PC-9 (cell line): ENCODE measurements at regions of chr1 and their contacts with region 1.

Region 1: DNA sequence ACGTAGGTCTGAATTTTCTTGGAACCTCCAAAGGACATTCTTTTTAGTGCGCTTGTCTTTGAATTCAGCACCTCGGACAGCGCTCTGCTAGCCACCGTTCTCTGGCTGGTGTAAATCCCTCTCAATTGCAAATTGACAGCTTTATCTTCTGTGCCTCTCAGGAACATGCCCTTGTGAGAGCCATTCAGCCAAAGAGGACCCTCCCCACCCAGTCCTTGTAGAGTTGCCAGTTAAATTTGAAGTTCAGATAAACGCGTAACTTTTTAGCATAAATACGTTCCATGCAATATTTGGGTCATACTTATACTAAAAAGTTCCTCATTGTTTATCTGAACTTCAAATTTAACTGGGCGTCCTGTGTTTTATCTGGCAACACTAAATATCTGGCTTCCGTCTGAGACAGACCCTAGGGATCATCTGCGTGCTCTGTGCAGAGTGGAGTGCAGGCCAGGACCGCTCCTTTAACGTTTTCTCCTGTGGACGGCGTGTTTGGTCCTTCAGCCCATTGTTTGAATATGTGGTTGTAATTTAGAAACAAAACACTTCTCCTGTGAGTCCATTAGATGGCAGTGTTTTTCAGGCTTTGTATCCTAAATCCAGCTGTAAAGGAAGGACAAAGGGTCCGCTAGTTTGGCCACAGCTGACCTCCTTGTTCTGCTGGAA is 7.0 kb downstream of the KCNAB2 start:
- DNase-seq: peak in 1 of 2 experiments; percentile 46
- H3K4me3 ChIP-seq: no peak overlapping the region
- H3K27ac ChIP-seq: no peak overlapping the region
- H3K4me1 ChIP-seq: no peaks in the 10 kb centered on the region; the same call in 1 of the 2 replicates
- H3K27me3 ChIP-seq: no peaks in the 10 kb centered on the region
- CTCF ChIP-seq: peak; percentile 71

Region 2: DNA sequence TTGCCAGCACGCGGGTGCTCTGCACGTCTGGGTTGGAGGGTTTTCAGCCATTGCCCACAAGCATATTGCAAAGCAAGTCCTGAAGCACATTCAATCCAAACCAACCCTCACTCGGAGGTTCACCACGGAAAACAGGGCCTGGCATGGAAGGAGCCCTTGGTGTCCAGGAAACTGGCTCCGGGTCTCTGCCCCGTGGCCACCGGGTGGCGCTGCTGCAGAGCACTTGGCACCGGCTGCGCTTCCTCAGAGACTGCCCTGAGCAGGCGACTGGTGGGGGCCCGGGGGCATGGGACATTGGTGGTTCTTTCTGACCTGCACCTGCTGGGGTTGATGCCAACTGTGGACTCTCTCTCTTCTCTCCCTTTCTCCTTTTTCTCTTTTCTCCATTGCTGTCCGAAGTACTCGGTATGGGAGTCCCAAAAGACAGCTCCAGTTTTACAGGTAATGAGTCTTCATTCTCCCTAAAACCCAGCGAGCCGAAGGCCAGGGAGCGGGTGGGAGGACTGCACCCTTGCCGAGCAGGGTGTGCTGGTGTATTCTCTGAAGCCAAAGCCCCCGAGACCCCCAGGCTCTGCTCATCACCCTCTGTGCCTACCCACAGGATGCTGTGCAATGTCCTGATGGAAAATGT is 11.1 kb before region 1 on chr1:
- CTCF ChIA-PET with region 1: interaction called, 10 read pairs
- POLR2A ChIA-PET with region 1: no interaction called
- intact Hi-C with region 1: no loop called
- DNase-seq: peak in 1 of 2 experiments; percentile 44
- H3K4me3 ChIP-seq: no peak overlapping the region
- H3K27ac ChIP-seq: no peak overlapping the region
- H3K4me1 ChIP-seq: no peaks in the 10 kb centered on the region
- H3K27me3 ChIP-seq: no peaks in the 10 kb centered on the region
- CTCF ChIP-seq: peak; percentile 62

Region 3: DNA sequence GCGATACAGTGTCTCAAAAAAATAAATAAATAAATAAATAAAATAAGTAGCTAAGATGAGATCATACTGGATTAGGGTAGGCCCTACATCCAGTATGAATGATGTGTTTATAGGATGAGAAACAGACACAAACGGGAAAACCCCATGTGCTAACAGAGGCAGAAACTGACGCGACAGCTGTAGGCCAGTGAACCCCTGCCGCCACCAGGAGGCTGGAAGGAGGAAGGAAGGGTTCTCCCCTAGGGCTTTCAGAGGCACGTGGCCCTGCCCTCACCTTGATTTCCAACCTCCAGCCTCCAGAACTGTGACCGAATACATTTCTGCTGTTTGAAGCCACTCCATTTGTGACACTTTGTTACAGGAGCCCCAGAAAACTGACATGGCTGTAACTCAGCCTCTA is 88.9 kb after region 1 on chr1:
- CTCF ChIA-PET with region 1: no interaction called
- POLR2A ChIA-PET with region 1: no interaction called
- intact Hi-C with region 1: no loop called
- DNase-seq: no peak
- H3K4me3 ChIP-seq: no peak overlapping the region
- H3K27ac ChIP-seq: no peak overlapping the region
- H3K4me1 ChIP-seq: peaks cover 8% of the 10 kb centered on the region; the same call in 1 of the 2 replicates
- H3K27me3 ChIP-seq: no peaks in the 10 kb centered on the region
- CTCF ChIP-seq: no peak

Region 4: GRCh38 chr1:6180212-6180575 is 127.5 kb after region 1 on chr1 and contains the start of gene CHD5:
- CTCF ChIA-PET with region 1: no interaction called
- POLR2A ChIA-PET with region 1: no interaction called
- intact Hi-C with region 1: loop called (anchors 5 kb)
- DNase-seq: no peak
- H3K4me3 ChIP-seq: no peak within 1 kb of the TSS
- H3K27ac ChIP-seq: no peak within 1 kb of the TSS
- H3K4me1 ChIP-seq: 0 out of 2 replicates have a peak, but pooled peaks cover 14% of the 10 kb centered on the region
- H3K27me3 ChIP-seq: no peaks in the 10 kb centered on the region
- CTCF ChIP-seq: no peak
- total RNA-seq, gene CHD5: 0.50 and 0.63 TPM in 2 replicates

Region 5: GRCh38 chr1:6672558-6672957 is 619.9 kb after region 1 on chr1:
- CTCF ChIA-PET with region 1: no interaction called
- POLR2A ChIA-PET with region 1: no interaction called
- intact Hi-C with region 1: no loop called
- DNase-seq: no peak
- H3K4me3 ChIP-seq: no peak overlapping the region
- H3K27ac ChIP-seq: no peak overlapping the region
- H3K4me1 ChIP-seq: no peaks in the 10 kb centered on the region
- H3K27me3 ChIP-seq: no peaks in the 10 kb centered on the region
- CTCF ChIP-seq: no peak